Aorta (tissue), 5 donors: ENCODE measurements at regions of chr2 and their contacts with region 1.

Region 1: DNA sequence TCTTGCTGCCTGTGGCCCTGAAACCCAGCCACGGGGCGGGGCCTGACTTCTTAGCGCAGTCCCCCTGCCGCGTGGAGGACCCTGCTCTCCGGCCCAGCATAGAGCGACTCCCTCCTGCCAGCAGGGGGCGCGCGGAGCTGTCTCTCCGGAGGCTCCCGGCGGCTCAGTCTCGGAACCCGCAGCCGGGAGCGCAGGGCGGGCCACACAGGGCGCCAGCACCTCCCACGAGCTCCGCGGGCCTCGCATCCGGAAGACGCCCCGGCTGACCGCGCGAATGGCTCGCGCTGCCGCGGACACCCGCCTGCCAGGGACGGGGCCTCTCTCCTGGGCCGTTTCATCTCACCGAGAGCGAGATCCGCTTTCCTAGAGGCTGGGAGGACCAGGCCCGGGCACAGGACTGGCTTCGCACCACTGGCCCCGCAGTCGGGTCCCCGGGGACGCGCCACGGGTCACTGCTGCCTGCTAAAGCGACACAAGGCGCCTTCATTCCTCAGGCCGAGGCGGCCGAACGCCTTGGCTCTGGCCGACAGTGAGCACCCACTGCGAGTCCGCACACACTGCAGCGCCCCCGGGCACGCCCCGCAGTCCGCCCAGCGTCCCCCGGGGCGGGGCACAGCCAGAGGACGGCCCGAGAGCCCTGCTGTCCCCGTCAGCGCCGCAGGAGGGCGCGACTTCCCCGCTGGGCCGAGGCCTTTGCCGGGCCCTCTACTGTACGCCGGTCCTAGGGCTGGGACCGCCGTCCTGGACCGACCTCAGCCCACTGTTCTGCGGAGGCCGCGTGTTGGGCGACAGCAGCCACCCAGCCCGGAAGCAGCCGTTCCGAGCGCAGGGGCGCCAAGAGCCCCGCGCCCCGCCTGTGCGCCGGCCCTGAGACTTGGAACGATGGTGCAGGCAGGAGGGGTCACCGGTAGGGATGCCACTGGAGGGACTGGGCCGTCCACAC is 39.0 kb upstream of the ARHGEF4 start:
- DNase-seq: peak; percentile 94 to 98
- ATAC-seq: peak; percentile 99
- H3K4me3 ChIP-seq: peak overlapping the region; percentile 36 to 37
- H3K27ac ChIP-seq: peak overlapping the region; percentile 38 to 72
- H3K4me1 ChIP-seq: no peaks in the 10 kb centered on the region
- H3K27me3 ChIP-seq: no peaks in the 10 kb centered on the region

Region 2: GRCh38 chr2:130372055-130372832 is 425.5 kb before region 1 on chr2:
- intact Hi-C with region 1: loop called in 1 of 2 experiments (anchors 10 kb)
- DNase-seq: peak; percentile 94 to 97
- ATAC-seq: peak; percentile 96
- H3K4me3 ChIP-seq: peak overlapping the region; percentile 58 to 91
- H3K27ac ChIP-seq: peak overlapping the region; percentile 6 to 54
- H3K4me1 ChIP-seq: no peaks in the 10 kb centered on the region
- H3K27me3 ChIP-seq: no peaks in the 10 kb centered on the region

Region 3: DNA sequence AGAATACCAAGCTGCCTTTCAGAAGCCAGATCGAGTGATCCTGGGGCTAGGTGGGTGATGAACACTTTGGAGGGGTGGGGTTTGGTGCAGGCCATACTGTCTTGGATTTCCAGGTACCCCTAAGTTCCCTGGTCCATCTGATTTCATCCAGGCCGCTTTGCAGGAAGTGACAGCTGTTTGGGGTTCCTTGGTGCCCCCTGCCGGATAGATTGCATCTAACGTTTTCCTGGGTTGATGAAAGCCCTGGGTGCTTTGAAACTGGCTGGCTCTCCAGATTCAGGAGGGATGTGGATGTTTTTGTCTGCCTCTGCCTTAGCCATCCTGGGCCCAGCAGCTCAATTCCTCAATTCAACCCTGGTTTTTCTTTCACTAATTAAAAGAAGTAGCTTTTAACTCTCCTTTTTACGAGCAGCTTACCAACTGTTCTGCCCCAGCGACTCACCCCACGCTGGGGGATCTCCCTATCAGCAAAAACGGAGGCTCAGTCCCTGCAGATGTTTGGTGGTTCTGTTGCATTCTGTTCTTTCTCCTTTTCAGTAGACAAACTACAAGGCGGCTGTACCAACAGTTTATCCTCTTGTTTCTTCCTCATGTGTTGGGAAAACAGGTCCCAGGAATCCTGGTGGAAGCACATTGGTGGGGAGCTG is 76.1 kb after region 1 on chr2:
- intact Hi-C with region 1: loop called (anchors 1 to 2 kb)
- DNase-seq: peak; percentile 81 to 84
- ATAC-seq: no peak
- H3K4me3 ChIP-seq: no peak overlapping the region
- H3K27ac ChIP-seq: no peak overlapping the region
- H3K4me1 ChIP-seq: no peaks in the 10 kb centered on the region
- H3K27me3 ChIP-seq: no peaks in the 10 kb centered on the region

Region 4: GRCh38 chr2:130920415-130921163 is 122.8 kb after region 1 on chr2:
- intact Hi-C with region 1: loop called (anchors 1 to 2 kb)
- DNase-seq: peak in 1 of 2 donors; percentile 56
- ATAC-seq: no peak
- H3K4me3 ChIP-seq: no peak overlapping the region
- H3K27ac ChIP-seq: no peak overlapping the region
- H3K4me1 ChIP-seq: no peaks in the 10 kb centered on the region
- H3K27me3 ChIP-seq: no peaks in the 10 kb centered on the region

Region 5: GRCh38 chr2:131093006-131093695 is 295.4 kb after region 1 on chr2 and contains the start of gene FAM168B:
- intact Hi-C with region 1: loop called in 1 of 2 experiments (anchors 5 kb)
- DNase-seq: peak; percentile 93 to 96
- ATAC-seq: peak; percentile 99
- H3K4me3 ChIP-seq: peak within 1 kb of the TSS; percentile 95 to 99
- H3K27ac ChIP-seq: peak within 1 kb of the TSS; percentile 95 to 100
- H3K4me1 ChIP-seq: no peaks in the 10 kb centered on the region
- H3K27me3 ChIP-seq: no peaks in the 10 kb centered on the region
- total RNA-seq, gene FAM168B: 80.3 to 86.7 TPM